ENCODE measurements at regions of chr5 and their contacts with region 1.

Region 1: GRCh38 chr5:141557681-141558136 is 61.1 kb downstream of the DIAPH1 start:
- DNase-seq: peak; percentile 99
- H3K4me3 Mint-ChIP-seq: peak overlapping the region; percentile 70
- H3K27ac Mint-ChIP-seq: peak overlapping the region; percentile 98
- H3K4me1 Mint-ChIP-seq: peaks cover 49% of the 10 kb centered on the region
- H3K27me3 Mint-ChIP-seq: no peaks in the 10 kb centered on the region
- CTCF ChIP-seq: peak; percentile 93

Region 2: DNA sequence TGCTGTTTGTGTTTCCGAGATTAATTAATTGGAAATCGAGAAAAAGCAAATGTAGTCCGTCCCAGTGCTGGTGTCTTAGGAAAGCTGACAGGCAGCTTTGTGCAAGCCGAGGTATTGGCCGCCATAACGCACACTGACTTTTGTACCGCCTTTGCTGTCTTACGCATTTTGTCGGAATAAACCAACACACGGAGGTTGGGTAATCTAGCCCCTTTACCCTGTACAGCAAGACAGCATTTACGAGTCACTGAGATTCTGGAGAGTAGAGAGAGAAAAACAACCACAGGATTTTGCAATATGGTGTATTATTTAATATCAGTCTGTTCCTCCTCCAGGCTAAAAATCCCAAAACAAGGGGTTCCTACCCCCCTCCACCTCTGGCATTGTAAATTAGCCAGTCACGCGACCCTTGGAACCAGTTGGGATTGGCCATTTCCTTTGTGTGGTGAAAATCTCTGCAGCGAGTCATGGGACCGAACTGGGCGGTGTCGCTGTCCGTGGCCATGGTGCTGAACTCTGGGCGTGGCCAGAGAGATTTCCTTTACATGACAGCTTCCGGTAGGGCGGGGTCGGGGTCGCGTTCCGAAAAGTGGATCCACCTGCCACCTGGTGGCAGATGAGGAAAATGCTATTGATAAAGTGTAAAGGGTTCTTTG is 516.8 kb before region 1 on chr5:
- CTCF ChIA-PET with region 1: no interaction called
- POLR2A ChIA-PET with region 1: interaction called, 9 read pairs
- intact Hi-C with region 1: loop called (anchors 2 kb)
- DNase-seq: peak; percentile 98
- H3K4me3 Mint-ChIP-seq: no peak overlapping the region
- H3K27ac Mint-ChIP-seq: no peak overlapping the region
- H3K4me1 Mint-ChIP-seq: no peaks in the 10 kb centered on the region
- H3K27me3 Mint-ChIP-seq: peaks cover 31% of the 10 kb centered on the region
- CTCF ChIP-seq: peak; percentile 89

Region 3: GRCh38 chr5:141199359-141200235 is 358.1 kb before region 1 on chr5 and contains the start of gene PCDHB11:
- CTCF ChIA-PET with region 1: interaction called, 36 read pairs
- POLR2A ChIA-PET with region 1: interaction called, 26 read pairs
- intact Hi-C with region 1: no loop called
- DNase-seq: peak; percentile 32
- H3K4me3 Mint-ChIP-seq: peak within 1 kb of the TSS; percentile 61
- H3K27ac Mint-ChIP-seq: no peak within 1 kb of the TSS
- H3K4me1 Mint-ChIP-seq: no peaks in the 10 kb centered on the region
- H3K27me3 Mint-ChIP-seq: no peaks in the 10 kb centered on the region
- CTCF ChIP-seq: peak; percentile 40
- total RNA-seq, gene PCDHB11: 0.75 and 1.3 TPM in 2 replicates

Region 4: GRCh38 chr5:141330299-141331080 is 227.2 kb before region 1 on chr5 and contains the start of gene PCDHGA1:
- CTCF ChIA-PET with region 1: interaction called, 20 read pairs
- POLR2A ChIA-PET with region 1: no interaction called
- intact Hi-C with region 1: no loop called
- DNase-seq: peak; percentile 60
- H3K4me3 Mint-ChIP-seq: peak within 1 kb of the TSS; percentile 58
- H3K27ac Mint-ChIP-seq: no peak within 1 kb of the TSS
- H3K4me1 Mint-ChIP-seq: no peaks in the 10 kb centered on the region
- H3K27me3 Mint-ChIP-seq: no peaks in the 10 kb centered on the region
- CTCF ChIP-seq: peak; percentile 47
- total RNA-seq, gene PCDHGA1: 0.20 and 0.35 TPM in 2 replicates

Region 5: DNA sequence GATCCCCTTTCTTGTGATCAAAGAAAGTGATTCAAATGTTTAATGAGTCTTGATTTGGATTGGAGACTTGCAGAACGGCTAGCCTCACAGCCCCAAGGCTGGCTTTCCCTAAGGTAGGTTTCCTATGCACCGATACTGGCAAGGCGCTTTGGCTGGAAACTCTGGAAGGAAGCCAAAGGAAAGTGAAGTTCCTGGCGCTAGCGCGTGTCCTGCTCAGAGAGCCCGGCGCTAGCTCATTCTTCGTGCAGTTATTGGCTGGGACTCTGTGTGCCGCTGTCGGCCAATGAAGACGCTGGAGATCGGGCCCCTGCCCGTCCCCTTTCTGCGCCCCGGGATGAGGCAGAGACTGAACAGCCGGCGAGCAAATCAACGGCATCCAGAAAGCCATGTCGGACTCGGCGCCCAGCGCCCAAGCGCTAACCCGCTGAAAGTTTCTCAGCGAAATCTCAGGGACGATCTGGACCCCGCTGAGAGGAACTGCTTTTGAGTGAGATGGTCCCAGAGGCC is 82.0 kb before region 1 on chr5 and contains the start of gene PCDHGC3:
- CTCF ChIA-PET with region 1: interaction called, 35 read pairs
- POLR2A ChIA-PET with region 1: interaction called, 82 read pairs
- intact Hi-C with region 1: loop called (anchors 1 kb)
- DNase-seq: peak; percentile 98
- H3K4me3 Mint-ChIP-seq: peak within 1 kb of the TSS; percentile 94
- H3K27ac Mint-ChIP-seq: peak within 1 kb of the TSS; percentile 84
- H3K4me1 Mint-ChIP-seq: peaks cover 18% of the 10 kb centered on the region
- H3K27me3 Mint-ChIP-seq: no peaks in the 10 kb centered on the region
- CTCF ChIP-seq: peak; percentile 55
- total RNA-seq, gene PCDHGC3: 17.3 and 31.7 TPM in 2 replicates

Region 6: GRCh38 chr5:141547488-141547887 is 10.2 kb before region 1 on chr5:
- CTCF ChIA-PET with region 1: interaction called, 34 read pairs
- POLR2A ChIA-PET with region 1: interaction called, 31 read pairs
- intact Hi-C with region 1: no loop called
- DNase-seq: peak; percentile 39
- H3K4me3 Mint-ChIP-seq: no peak overlapping the region
- H3K27ac Mint-ChIP-seq: no peak overlapping the region
- H3K4me1 Mint-ChIP-seq: no peaks in the 10 kb centered on the region
- H3K27me3 Mint-ChIP-seq: no peaks in the 10 kb centered on the region
- CTCF ChIP-seq: no peak

Measured in MCF 10A (cell line).